GM12878 (cell line): ENCODE measurements at regions of chr6 and their contacts with region 1.

Region 1: GRCh38 chr6:75266716-75267291 is 17.8 kb downstream of the TMEM30A start:
- DNase-seq: no peak
- ATAC-seq: peak; percentile 76
- H3K4me3 ChIP-seq: no peak overlapping the region
- H3K27ac ChIP-seq: no peak overlapping the region
- H3K4me1 ChIP-seq: no peaks in the 10 kb centered on the region
- H3K27me3 ChIP-seq: no peaks in the 10 kb centered on the region
- CTCF ChIP-seq: peak; percentile 65 to 74 (median 74); a peak in 5 of 6 replicates
- EP300 ChIP-seq: no peak
- POLR2A ChIP-seq: no peak
- RAD21 ChIP-seq: peak; percentile 82

Region 2: GRCh38 chr6:75024828-75025227 is 242.0 kb before region 1 on chr6:
- CTCF ChIA-PET with region 1: no interaction called
- POLR2A ChIA-PET with region 1: no interaction called
- RAD21 ChIA-PET with region 1: no interaction called
- SMC1A ChIA-PET with region 1: no interaction called
- in situ Hi-C with region 1: no loop called
- intact Hi-C with region 1: no loop called
- DNase-seq: no peak
- ATAC-seq: no peak
- H3K4me3 ChIP-seq: no peak overlapping the region
- H3K27ac ChIP-seq: no peak overlapping the region
- H3K4me1 ChIP-seq: no peaks in the 10 kb centered on the region
- H3K27me3 ChIP-seq: no peaks in the 10 kb centered on the region
- CTCF ChIP-seq: no peak
- EP300 ChIP-seq: no peak
- POLR2A ChIP-seq: no peak
- RAD21 ChIP-seq: no peak

Region 3: DNA sequence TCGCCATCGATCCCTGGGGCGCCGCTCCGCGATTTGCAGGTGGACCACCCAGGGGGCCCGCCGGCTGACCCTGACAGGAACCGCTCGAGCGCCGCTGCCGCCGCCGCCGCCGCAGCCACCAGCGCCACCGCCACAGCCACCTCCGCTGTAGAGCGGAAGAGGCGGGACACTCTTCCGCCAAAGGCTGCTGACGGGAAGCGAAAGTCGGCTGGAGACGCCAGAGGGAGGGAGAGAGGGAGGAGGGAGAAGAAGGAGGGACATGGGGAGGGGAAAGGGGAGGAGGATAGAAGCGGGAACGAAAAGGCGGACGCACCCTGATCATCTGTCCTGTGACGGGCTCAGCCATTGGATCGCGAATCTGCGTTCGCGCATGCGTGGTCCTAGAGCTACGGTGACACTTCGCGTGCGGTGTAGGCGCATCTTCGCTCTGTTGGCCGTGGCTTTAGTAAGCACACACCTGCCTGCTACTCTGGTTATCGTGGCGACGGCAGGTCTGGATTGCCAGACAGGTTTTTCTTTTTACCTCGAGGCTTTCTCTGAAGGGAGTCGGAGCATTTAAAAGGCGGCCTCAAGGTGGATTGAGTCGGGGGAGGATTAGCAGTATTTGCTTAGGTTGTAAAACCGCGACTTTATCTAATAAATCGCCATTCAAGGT is 18.0 kb after region 1 on chr6 and contains the start of gene TMEM30A:
- CTCF ChIA-PET with region 1: interaction called, 163 read pairs
- POLR2A ChIA-PET with region 1: interaction called, 23 read pairs
- RAD21 ChIA-PET with region 1: interaction called, 142 read pairs
- SMC1A ChIA-PET with region 1: interaction called, 196 read pairs
- in situ Hi-C with region 1: no loop called
- intact Hi-C with region 1: loop called (anchors 2 kb)
- DNase-seq: peak; percentile 100
- ATAC-seq: peak; percentile 80
- H3K4me3 ChIP-seq: peak within 1 kb of the TSS; percentile 94
- H3K27ac ChIP-seq: peak within 1 kb of the TSS; percentile 80
- H3K4me1 ChIP-seq: no peaks in the 10 kb centered on the region
- H3K27me3 ChIP-seq: no peaks in the 10 kb centered on the region
- CTCF ChIP-seq: no peak
- EP300 ChIP-seq: peak in 1 of 2 experiments; percentile 71; a peak in 1 of 4 replicates
- POLR2A ChIP-seq: peak; percentile 96
- RAD21 ChIP-seq: no peak
- polyA plus RNA-seq, gene TMEM30A: 11.9 to 23.1 TPM

Region 4: DNA sequence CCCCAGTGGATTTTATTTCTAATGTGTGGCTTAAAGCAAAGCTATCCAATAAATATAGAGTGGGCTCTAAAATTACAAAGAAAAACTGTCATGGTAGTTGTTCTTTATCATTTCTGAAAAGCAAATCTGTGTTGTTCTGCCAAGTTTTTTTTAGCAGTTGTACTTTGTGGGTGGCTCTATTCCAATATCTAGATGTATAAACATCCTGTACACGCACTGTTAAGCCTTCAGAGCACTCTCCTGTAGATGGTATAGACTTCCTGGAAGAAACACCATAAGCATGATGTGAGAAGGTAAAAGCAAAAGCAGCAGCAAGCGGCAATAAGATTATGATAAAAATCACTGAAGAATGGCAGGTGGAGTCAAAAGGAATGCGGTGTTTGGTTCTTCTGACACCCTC is 39.3 kb after region 1 on chr6:
- CTCF ChIA-PET with region 1: interaction called, 50 read pairs
- POLR2A ChIA-PET with region 1: no interaction called
- RAD21 ChIA-PET with region 1: interaction called, 13 read pairs
- SMC1A ChIA-PET with region 1: interaction called, 10 read pairs
- in situ Hi-C with region 1: no loop called
- intact Hi-C with region 1: no loop called
- DNase-seq: no peak
- ATAC-seq: no peak
- H3K4me3 ChIP-seq: no peak overlapping the region
- H3K27ac ChIP-seq: no peak overlapping the region
- H3K4me1 ChIP-seq: no peaks in the 10 kb centered on the region
- H3K27me3 ChIP-seq: no peaks in the 10 kb centered on the region
- CTCF ChIP-seq: no peak
- EP300 ChIP-seq: no peak
- POLR2A ChIP-seq: no peak
- RAD21 ChIP-seq: no peak

Region 5: GRCh38 chr6:75481936-75482593 is 215.3 kb after region 1 on chr6:
- CTCF ChIA-PET with region 1: interaction called, 11 read pairs
- POLR2A ChIA-PET with region 1: no interaction called
- RAD21 ChIA-PET with region 1: interaction called, 4 read pairs
- SMC1A ChIA-PET with region 1: no interaction called
- in situ Hi-C with region 1: no loop called
- intact Hi-C with region 1: no loop called
- DNase-seq: no peak
- ATAC-seq: no peak
- H3K4me3 ChIP-seq: no peak overlapping the region
- H3K27ac ChIP-seq: no peak overlapping the region
- H3K4me1 ChIP-seq: 0 out of 2 replicates have a peak, but pooled peaks cover 4% of the 10 kb centered on the region
- H3K27me3 ChIP-seq: no peaks in the 10 kb centered on the region
- CTCF ChIP-seq: no peak
- EP300 ChIP-seq: no peak
- POLR2A ChIP-seq: no peak
- RAD21 ChIP-seq: no peak

Region 6: GRCh38 chr6:75504465-75505228 is 237.8 kb after region 1 on chr6:
- CTCF ChIA-PET with region 1: interaction called, 36 read pairs
- POLR2A ChIA-PET with region 1: no interaction called
- RAD21 ChIA-PET with region 1: interaction called, 10 read pairs
- SMC1A ChIA-PET with region 1: interaction called, 31 read pairs
- in situ Hi-C with region 1: no loop called
- intact Hi-C with region 1: no loop called
- DNase-seq: no peak
- ATAC-seq: peak; percentile 55
- H3K4me3 ChIP-seq: no peak overlapping the region
- H3K27ac ChIP-seq: no peak overlapping the region
- H3K4me1 ChIP-seq: no peaks in the 10 kb centered on the region
- H3K27me3 ChIP-seq: no peaks in the 10 kb centered on the region
- CTCF ChIP-seq: peak in 1 of 3 experiments; percentile 33; a peak in 2 of 6 replicates
- EP300 ChIP-seq: no peak
- POLR2A ChIP-seq: no peak
- RAD21 ChIP-seq: peak; percentile 42; the same call in 1 of the 2 replicates

Region 7: DNA sequence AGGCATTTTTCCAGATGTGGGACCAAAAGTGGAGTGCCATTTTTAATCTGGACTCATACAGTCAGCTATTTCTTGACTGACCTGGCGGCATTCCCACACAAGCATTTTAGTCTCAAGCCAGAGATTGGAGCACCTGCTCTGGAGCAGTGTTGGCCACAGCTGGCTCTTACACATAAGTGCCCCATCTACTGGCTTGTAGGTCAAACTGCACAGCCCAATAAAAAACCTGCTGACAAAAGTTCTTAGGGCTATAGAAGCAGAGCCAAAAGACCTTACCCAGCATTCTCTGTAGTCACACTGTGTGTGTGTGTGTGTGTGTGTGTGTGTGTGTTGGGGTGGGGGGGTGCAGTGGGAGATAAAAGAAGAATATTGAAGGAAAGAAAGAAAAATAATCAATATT is 296.2 kb after region 1 on chr6:
- CTCF ChIA-PET with region 1: interaction called, 12 read pairs
- POLR2A ChIA-PET with region 1: no interaction called
- RAD21 ChIA-PET with region 1: no interaction called
- SMC1A ChIA-PET with region 1: interaction called, 4 read pairs
- in situ Hi-C with region 1: no loop called
- intact Hi-C with region 1: no loop called
- DNase-seq: no peak
- ATAC-seq: peak; percentile 99
- H3K4me3 ChIP-seq: no peak overlapping the region
- H3K27ac ChIP-seq: no peak overlapping the region
- H3K4me1 ChIP-seq: no peaks in the 10 kb centered on the region
- H3K27me3 ChIP-seq: no peaks in the 10 kb centered on the region; a peak in 1 of 4 replicates
- CTCF ChIP-seq: peak; percentile 51 to 60 (median 57)
- EP300 ChIP-seq: no peak
- POLR2A ChIP-seq: no peak
- RAD21 ChIP-seq: peak; percentile 45

Region 8: DNA sequence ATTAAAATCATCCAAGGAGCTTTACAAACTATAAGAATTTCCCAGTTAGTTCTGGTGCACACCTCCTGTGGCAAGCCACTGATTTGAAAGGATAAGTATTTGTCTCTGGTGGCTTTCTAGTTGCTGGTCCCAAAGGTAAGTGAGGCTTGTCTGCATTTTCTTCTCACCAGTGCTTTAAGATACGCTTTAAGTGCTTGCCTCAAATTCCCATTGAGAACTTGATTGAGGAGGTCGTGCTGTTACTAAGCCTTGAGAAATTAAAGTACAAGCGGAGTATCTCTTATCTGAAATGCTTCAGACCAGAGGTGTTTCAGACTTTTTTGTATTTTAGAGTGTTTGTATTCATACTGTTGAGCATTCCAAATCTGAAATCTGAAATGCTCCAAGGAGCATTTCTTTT is 452.3 kb after region 1 on chr6:
- CTCF ChIA-PET with region 1: no interaction called
- POLR2A ChIA-PET with region 1: no interaction called
- RAD21 ChIA-PET with region 1: no interaction called
- SMC1A ChIA-PET with region 1: no interaction called
- in situ Hi-C with region 1: no loop called
- intact Hi-C with region 1: no loop called
- DNase-seq: no peak
- ATAC-seq: no peak
- H3K4me3 ChIP-seq: no peak overlapping the region
- H3K27ac ChIP-seq: no peak overlapping the region
- H3K4me1 ChIP-seq: no peaks in the 10 kb centered on the region
- H3K27me3 ChIP-seq: no peaks in the 10 kb centered on the region
- CTCF ChIP-seq: no peak
- EP300 ChIP-seq: no peak
- POLR2A ChIP-seq: no peak
- RAD21 ChIP-seq: no peak